RWPE1 (cell line): ENCODE measurements at regions of chr19 and their contacts with region 1.

Region 1: GRCh38 chr19:8252922-8253589 is 43.9 kb downstream of the CERS4 start:
- DNase-seq: peak; percentile 91
- H3K27ac ChIP-seq: no peak overlapping the region
- CTCF ChIP-seq: peak; percentile 91

Region 2: DNA sequence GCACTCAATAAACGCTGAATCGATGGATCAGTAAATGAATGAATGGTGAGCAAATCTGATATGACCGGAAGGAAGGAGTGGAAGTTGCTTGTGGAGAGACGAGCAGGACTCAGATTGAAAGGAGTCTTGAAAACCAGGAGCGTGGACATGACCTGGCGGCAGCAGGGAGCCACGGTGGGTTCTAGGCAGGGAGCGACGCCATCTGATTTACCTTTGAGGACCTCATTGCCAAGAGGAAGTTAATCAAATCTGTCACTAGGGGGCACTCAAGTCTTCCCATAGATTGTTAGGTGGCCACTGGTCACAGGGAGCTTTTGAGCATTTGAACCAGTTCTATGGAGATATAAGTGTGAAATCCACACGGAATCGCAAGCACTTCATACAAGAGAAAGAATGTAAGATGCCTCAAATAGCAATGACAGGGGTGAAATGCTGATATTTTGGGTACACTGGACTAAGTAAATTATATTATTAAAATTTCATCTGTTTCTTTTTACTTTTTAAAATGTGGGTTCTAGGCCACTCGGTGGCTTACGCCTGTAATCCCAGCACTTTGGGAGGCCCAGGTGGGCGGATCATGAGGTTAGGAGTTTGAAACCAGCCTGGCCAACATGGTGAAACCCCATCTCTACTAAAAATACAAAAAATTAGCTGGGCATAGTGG is 94.5 kb before region 1 on chr19:
- CTCF ChIA-PET with region 1: interaction called, 32 read pairs
- POLR2A ChIA-PET with region 1: interaction called, 7 read pairs
- DNase-seq: peak; percentile 67
- H3K27ac ChIP-seq: no peak overlapping the region
- CTCF ChIP-seq: peak; percentile 54

Region 3: GRCh38 chr19:8174706-8175105 is 78.3 kb before region 1 on chr19:
- CTCF ChIA-PET with region 1: no interaction called
- POLR2A ChIA-PET with region 1: no interaction called
- DNase-seq: peak; percentile 73
- H3K27ac ChIP-seq: peak overlapping the region; percentile 73
- CTCF ChIP-seq: no peak